ENCODE measurements at regions of chr2 and their contacts with region 1.

Region 1: DNA sequence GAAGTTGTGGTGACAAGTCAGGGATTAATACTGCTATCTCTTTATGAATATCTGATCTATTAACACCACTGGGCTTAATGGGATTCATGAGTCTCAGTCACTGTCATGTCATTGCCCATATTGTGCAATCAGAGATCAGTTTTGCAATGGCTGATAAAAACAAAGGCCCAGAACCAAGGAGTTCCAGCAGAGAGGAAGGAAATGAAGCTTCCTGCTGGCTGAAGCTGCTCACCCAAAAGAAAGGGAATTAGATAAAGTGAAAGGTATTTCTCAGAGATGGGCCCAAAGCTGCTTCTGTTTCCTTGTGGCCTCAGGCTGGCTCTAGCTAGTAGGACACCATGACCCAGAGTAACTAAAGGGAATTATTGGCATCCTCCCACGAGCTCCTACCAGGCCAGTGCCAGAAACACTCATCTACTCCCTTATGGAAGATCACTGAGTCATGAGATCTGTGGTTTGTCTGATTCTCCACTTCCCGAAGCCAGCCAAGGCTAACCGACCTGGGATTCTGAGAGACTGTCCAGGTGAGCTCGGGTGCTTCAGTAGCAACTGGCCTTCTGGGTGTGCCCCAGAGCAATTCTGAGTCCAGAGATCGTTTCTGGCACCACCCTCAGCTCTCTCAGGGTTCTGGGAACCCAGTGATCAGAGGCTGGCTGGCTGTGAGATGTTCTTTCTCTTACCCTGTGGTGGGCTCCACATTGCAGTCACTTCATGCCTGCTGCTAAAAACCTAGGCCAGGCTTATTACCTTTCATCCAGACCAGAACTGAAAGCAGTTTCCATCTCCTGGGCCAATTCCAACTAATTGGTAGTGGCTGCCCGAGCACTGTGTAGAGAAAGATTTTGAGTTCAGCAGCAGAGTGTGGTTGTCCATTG is 129.5 kb upstream of the PELI1 start:
- DNase-seq: no peak
- H3K4me3 ChIP-seq: no peak overlapping the region; a peak in 1 of 8 replicates
- H3K27ac ChIP-seq: no peak overlapping the region; the same call in 1 of the 2 replicates
- H3K4me1 ChIP-seq: peaks cover 19 to 38% (median 35%) of the 10 kb centered on the region in 4 experiments
- H3K27me3 ChIP-seq: no peaks in the 10 kb centered on the region
- CTCF ChIP-seq: no peak
- EP300 ChIP-seq: no peak
- POLR2A ChIP-seq: no peak; a peak in 1 of 3 replicates
- RAD21 ChIP-seq: no peak

Region 2: DNA sequence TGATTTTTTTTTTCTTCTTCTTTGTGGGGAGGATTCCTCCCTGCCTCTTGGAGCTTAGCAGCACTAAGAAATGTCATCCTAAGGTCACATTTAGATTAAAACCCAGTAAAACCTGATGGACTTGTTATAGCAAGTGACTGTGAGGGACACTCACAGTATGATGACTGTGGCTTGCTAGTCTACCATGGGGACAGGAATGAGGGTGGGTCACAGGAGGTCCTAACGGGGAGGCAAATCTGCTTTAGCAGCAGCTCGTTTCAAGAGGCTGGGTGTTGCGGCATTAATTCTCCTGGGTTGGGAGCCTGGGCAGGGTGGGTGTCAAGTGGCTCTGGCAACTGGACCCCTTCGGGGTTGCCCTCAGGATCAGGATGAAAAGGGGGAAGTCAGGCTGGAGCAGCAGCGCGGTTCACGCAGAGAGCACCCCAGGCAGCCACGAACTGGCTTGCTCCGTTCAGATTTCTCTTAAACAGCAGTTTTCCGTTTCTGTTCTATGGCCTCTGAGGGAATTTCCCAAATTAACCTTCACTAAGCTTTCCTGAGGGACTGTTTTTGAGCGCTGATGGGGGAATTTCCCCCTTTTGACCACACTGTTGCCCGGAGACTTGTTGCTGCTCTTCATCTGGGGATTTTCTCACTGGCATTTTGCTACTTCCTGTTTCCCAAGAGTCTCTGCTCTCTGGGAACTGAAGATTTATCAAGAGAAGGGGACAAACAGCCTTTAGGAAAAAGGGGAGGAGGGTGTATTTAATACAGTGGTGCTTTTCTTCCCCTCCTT is 69.7 kb before region 1 on chr2:
- CTCF ChIA-PET with region 1: no interaction called
- POLR2A ChIA-PET with region 1: no interaction called
- DNase-seq: no peak
- H3K4me3 ChIP-seq: 0 out of 8 replicates have a peak overlapping the region, but pooled peaks of 1 of the 4 experiments have one; percentile 13
- H3K27ac ChIP-seq: peak overlapping the region; percentile 51
- H3K4me1 ChIP-seq: peaks cover 6 to 11% (median 9%) of the 10 kb centered on the region in 4 experiments; a peak in 5 of 7 replicates
- H3K27me3 ChIP-seq: no peaks in the 10 kb centered on the region
- CTCF ChIP-seq: no peak
- EP300 ChIP-seq: no peak
- POLR2A ChIP-seq: peak in 1 of 2 experiments; percentile 36; a peak in 1 of 3 replicates
- RAD21 ChIP-seq: no peak

Region 3: DNA sequence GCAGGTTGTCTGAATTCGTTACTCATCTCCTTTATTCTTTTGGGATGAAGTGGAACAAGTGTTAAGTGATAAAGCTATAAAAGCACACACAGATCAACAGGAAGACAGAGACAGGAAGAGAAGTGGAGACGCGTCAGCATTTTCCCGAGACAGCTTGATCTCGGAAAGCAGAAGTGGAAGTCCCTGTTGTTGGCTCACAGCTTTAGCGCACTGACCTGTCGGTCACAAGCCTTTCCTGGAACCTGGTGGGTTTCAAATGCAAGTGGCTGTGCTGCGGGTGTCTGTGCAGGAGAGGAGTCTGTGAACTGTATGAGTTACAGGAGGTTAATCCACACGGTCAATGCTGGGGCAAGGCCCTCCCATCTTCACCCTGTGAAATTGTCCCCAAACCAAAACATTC is 12.9 kb before region 1 on chr2:
- CTCF ChIA-PET with region 1: interaction called, 11 read pairs
- POLR2A ChIA-PET with region 1: interaction called, 108 read pairs
- DNase-seq: no peak
- H3K4me3 ChIP-seq: no peak overlapping the region
- H3K27ac ChIP-seq: no peak overlapping the region
- H3K4me1 ChIP-seq: peaks cover 2 to 23% (median 19%) of the 10 kb centered on the region in 4 experiments; a peak in 5 of 7 replicates
- H3K27me3 ChIP-seq: no peaks in the 10 kb centered on the region
- CTCF ChIP-seq: no peak
- EP300 ChIP-seq: no peak
- POLR2A ChIP-seq: 0 out of 3 replicates have a peak, but pooled peaks of 1 of the 2 experiments have one; percentile 39
- RAD21 ChIP-seq: no peak

Region 4: GRCh38 chr2:64288321-64289193 is 14.8 kb after region 1 on chr2:
- CTCF ChIA-PET with region 1: no interaction called
- POLR2A ChIA-PET with region 1: interaction called, 15 read pairs
- DNase-seq: no peak
- H3K4me3 ChIP-seq: no peak overlapping the region
- H3K27ac ChIP-seq: no peak overlapping the region
- H3K4me1 ChIP-seq: peaks cover 10 to 20% (median 17%) of the 10 kb centered on the region in 4 experiments
- H3K27me3 ChIP-seq: no peaks in the 10 kb centered on the region
- CTCF ChIP-seq: no peak
- EP300 ChIP-seq: no peak
- POLR2A ChIP-seq: no peak
- RAD21 ChIP-seq: no peak

Region 5: GRCh38 chr2:64295326-64296139 is 21.8 kb after region 1 on chr2:
- CTCF ChIA-PET with region 1: no interaction called
- POLR2A ChIA-PET with region 1: interaction called, 19 read pairs
- DNase-seq: no peak
- H3K4me3 ChIP-seq: no peak overlapping the region
- H3K27ac ChIP-seq: no peak overlapping the region
- H3K4me1 ChIP-seq: no peaks in the 10 kb centered on the region
- H3K27me3 ChIP-seq: no peaks in the 10 kb centered on the region
- CTCF ChIP-seq: no peak
- EP300 ChIP-seq: no peak
- POLR2A ChIP-seq: no peak
- RAD21 ChIP-seq: no peak

Region 6: DNA sequence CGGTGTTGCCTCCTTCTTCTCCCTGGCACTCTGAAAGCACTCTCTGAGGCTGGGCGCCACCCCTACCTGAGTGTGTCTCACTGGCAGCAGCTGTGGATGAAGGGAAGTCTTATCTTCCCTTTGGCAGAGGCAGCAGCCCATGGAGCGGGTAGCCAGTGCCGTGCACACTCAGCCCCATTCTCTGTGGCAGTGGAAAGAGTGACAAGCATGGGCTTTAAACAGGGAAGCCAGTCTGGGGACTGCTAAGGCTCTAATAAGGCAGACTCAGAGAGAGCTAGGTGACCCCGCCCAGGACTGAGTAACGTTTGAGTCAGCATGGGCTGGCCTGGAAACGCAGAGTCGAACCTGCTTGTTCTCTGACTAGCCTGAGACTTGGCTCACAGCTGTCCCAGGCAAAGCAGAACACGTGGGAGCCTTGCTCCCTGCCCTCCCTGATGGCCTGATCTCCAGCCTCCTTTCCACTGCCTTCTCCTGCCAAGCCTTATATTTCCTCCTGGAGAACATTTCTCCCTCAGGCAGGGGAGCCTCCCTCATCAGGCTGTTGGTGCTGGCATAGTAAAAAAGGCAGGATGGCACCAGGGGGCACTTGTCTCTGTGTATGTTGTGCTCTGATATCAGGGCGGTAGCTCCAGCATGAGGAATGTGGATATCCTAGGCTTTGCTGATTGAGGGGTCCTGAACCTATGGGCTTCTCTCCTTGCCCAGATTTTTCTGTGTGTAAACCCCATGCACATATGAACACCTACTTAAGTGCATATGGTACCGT is 86.3 kb after region 1 on chr2:
- CTCF ChIA-PET with region 1: no interaction called
- POLR2A ChIA-PET with region 1: no interaction called
- DNase-seq: no peak
- H3K4me3 ChIP-seq: no peak overlapping the region
- H3K27ac ChIP-seq: no peak overlapping the region
- H3K4me1 ChIP-seq: peaks cover 3 to 18% (median 7%) of the 10 kb centered on the region in 4 experiments; a peak in 6 of 7 replicates
- H3K27me3 ChIP-seq: 0 out of 7 replicates have a peak, but pooled peaks cover 0 to 4% (median 0%) of the 10 kb centered on the region in 4 experiments
- CTCF ChIP-seq: peak in 1 of 3 experiments; percentile 26; a peak in 1 of 4 replicates
- EP300 ChIP-seq: no peak
- POLR2A ChIP-seq: no peak
- RAD21 ChIP-seq: peak; percentile 9 to 24; a peak in 2 of 4 replicates

Region 7: DNA sequence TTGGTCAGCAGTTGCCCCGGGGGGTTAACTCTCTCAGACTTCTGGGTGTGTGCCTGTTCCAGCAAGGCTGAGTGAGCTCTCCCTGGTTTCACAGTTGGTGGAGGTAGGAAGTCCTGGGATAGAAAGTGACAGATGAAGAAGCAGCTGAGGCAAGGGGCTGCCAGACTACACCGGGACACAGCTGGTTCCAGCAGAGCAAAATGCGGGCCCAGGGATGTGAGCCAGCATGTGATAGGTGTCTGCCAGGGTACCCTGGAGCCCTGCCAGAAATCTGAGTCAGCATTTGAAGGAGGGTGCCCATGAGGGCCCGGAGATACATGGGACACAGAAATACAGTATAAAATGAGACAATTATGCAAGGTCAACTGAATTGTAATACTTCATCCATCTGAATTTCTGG is 100.9 kb after region 1 on chr2:
- CTCF ChIA-PET with region 1: no interaction called
- POLR2A ChIA-PET with region 1: no interaction called
- DNase-seq: no peak
- H3K4me3 ChIP-seq: no peak overlapping the region
- H3K27ac ChIP-seq: no peak overlapping the region
- H3K4me1 ChIP-seq: no peaks in the 10 kb centered on the region
- H3K27me3 ChIP-seq: no peaks in the 10 kb centered on the region
- CTCF ChIP-seq: no peak
- EP300 ChIP-seq: no peak
- POLR2A ChIP-seq: no peak
- RAD21 ChIP-seq: no peak

Region 8: GRCh38 chr2:64410671-64411070 is 136.9 kb after region 1 on chr2:
- CTCF ChIA-PET with region 1: no interaction called
- POLR2A ChIA-PET with region 1: no interaction called
- DNase-seq: no peak
- H3K4me3 ChIP-seq: no peak overlapping the region
- H3K27ac ChIP-seq: no peak overlapping the region
- H3K4me1 ChIP-seq: peaks cover 0 to 5% (median 1%) of the 10 kb centered on the region in 4 experiments; a peak in 2 of 7 replicates
- H3K27me3 ChIP-seq: no peaks in the 10 kb centered on the region
- CTCF ChIP-seq: peak in 1 of 3 experiments; percentile 15; a peak in 1 of 4 replicates
- EP300 ChIP-seq: no peak
- POLR2A ChIP-seq: no peak
- RAD21 ChIP-seq: no peak